ENCODE measurements at regions of chr2 and their contacts with region 1.

Region 1: DNA sequence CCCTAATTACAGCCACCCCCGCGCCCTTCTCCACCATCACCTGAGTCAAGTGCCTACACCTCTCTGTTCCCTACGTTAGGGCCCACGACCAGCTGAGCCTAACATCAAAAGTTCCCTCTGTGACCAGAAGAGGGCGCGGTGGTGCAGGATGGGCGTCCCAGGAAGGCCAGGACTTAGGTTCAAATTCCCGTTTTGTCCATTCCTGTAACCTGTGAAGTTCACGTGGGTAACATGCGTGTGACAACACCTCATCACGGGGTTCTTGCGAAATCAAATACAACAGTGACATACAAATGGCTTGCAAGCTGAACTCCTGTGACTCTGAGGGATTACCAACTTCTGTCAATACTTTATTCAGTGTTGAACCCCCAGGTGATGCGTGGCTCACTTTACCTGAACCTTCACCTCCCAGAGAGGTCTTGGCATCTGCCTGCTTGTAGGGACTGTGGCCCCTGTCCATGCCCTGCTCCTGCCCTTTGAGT is 207.9 kb downstream of the ARL4C start:
- DNase-seq: peak; percentile 89
- H3K4me3 Mint-ChIP-seq: no peak overlapping the region
- H3K27ac Mint-ChIP-seq: peak overlapping the region; percentile 96
- H3K4me1 Mint-ChIP-seq: peaks cover 71% of the 10 kb centered on the region
- H3K27me3 Mint-ChIP-seq: no peaks in the 10 kb centered on the region

Region 2: DNA sequence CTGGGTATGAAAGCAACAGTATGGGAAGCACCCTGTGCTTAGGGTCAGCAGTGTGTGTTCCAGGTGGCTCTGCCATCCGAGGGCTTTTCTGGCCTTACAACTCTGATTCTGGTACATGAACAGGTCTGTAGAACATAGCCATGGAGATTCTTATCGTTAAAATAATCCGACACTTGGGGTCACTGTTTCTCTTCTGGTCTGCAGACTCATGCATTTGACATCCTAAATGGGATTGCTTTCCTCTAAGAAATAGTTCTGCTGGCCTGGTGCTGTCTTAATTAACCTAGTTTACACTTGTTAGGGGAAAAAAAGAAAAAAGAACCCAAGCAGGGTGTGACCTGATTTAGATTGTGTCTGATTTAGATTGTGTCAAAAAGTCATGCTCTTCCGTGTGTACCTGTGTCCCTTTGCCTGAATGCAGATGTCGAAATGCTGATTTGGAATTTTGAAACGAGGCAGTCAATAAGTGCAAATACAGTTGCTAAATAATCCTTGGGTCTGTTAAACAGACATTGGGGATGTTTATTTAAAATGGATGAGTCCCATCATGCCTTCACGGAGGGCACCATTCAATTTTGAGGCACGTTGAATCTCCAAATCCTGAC is 312.2 kb before region 1 on chr2:
- CTCF ChIA-PET with region 1: no interaction called
- intact Hi-C with region 1: loop called (anchors 5 kb)
- DNase-seq: peak; percentile 20
- H3K4me3 Mint-ChIP-seq: no peak overlapping the region
- H3K27ac Mint-ChIP-seq: no peak overlapping the region
- H3K4me1 Mint-ChIP-seq: peaks cover 12% of the 10 kb centered on the region
- H3K27me3 Mint-ChIP-seq: no peaks in the 10 kb centered on the region

Region 3: GRCh38 chr2:234300932-234301823 is 12.2 kb after region 1 on chr2:
- CTCF ChIA-PET with region 1: interaction called, 13 read pairs
- intact Hi-C with region 1: no loop called
- DNase-seq: no peak
- H3K4me3 Mint-ChIP-seq: no peak overlapping the region
- H3K27ac Mint-ChIP-seq: peak overlapping the region; percentile 14
- H3K4me1 Mint-ChIP-seq: peaks cover 53% of the 10 kb centered on the region
- H3K27me3 Mint-ChIP-seq: no peaks in the 10 kb centered on the region

Region 4: DNA sequence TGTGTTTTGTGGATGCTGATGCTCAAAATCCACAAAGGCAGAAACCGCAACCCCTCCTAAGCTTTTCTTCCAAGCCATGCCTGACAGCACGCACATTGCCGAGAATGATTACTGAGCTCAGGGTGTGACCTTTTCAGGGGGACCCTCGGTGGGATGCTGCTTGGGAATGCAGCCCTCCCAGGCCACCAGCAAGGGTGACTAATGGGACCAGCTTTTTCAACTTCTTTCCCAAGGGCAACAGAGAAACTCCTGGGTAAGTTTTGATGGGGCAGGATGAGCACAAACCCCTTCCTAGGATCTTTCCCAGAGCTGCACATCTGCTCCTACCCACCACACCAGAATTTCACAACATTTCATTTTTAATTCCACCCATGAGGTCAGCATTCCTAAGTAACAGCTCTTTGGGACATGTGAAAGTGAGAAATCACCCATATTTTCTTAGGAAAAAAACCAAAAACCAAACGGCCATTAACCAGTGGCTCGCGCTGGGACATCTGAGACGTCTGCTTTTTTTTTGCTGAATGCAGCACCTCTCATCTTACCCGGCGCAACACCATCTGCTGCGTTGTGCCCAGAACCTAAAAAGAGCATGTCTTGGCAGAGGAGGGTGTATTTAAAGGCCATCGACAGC is 88.9 kb after region 1 on chr2:
- CTCF ChIA-PET with region 1: interaction called, 18 read pairs
- intact Hi-C with region 1: loop called (anchors 1 kb)
- DNase-seq: no peak
- H3K4me3 Mint-ChIP-seq: no peak overlapping the region
- H3K27ac Mint-ChIP-seq: no peak overlapping the region
- H3K4me1 Mint-ChIP-seq: peaks cover 34% of the 10 kb centered on the region
- H3K27me3 Mint-ChIP-seq: no peaks in the 10 kb centered on the region

Region 5: GRCh38 chr2:234463626-234464290 is 174.7 kb after region 1 on chr2:
- CTCF ChIA-PET with region 1: interaction called, 5 read pairs
- intact Hi-C with region 1: loop called (anchors 1 kb)
- DNase-seq: peak; percentile 83
- H3K4me3 Mint-ChIP-seq: peak overlapping the region; percentile 72
- H3K27ac Mint-ChIP-seq: peak overlapping the region; percentile 89
- H3K4me1 Mint-ChIP-seq: peaks cover 73% of the 10 kb centered on the region
- H3K27me3 Mint-ChIP-seq: no peaks in the 10 kb centered on the region

Region 6: DNA sequence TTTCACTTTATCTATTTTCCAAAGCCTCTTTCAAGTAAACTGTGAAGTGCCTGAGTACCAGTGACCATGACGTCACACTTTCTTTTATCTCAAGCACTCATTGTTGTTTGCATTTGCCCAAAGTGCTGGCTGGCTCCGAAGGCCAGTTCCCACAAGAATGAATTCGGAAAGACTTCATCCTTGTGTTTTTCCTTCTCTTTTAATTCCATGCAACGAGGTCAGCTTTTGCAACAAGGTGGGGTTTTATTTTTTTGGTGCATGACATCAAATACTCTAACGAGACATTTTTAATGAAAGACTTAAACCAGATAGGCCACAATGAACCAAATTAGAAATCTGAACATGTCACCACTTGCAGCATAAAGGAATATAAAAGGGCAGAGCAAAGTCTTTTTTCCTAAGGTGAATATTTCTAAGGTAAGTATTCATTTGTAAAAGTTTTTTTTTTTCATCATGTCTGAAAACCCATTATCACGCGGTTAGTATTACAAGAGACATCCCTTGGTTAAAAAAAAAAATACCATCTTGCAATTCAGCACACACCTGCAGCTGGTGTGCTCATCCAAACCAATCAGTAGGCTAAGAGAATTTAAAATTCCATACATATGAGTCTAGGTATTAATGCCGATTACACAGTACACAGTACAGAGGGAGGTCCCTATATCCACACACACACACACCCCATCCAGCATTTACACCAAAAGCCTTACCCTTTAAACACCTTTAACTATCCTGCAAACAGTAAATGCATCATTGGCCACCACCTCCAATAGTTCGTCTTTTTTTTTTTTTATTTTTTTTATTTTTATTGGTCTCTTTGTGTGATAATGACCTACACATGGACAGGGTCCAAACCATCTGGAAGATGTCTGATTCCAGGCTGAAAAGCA is 205.6 kb after region 1 on chr2:
- CTCF ChIA-PET with region 1: interaction called, 13 read pairs
- intact Hi-C with region 1: loop called (anchors 1 kb)
- DNase-seq: no peak
- H3K4me3 Mint-ChIP-seq: peak overlapping the region; percentile 90
- H3K27ac Mint-ChIP-seq: peak overlapping the region; percentile 89
- H3K4me1 Mint-ChIP-seq: peaks cover 48% of the 10 kb centered on the region
- H3K27me3 Mint-ChIP-seq: no peaks in the 10 kb centered on the region